ENCODE measurements at regions of chr5 and their contacts with region 1.

Region 1: GRCh38 chr5:96790961-96791504 is 16.7 kb downstream of the ERAP1 start:
- DNase-seq: peak; percentile 60
- ATAC-seq: peak; percentile 71
- H3K4me3 ChIP-seq: no peak overlapping the region
- H3K27ac ChIP-seq: no peak overlapping the region
- H3K4me1 ChIP-seq: peaks cover 16% of the 10 kb centered on the region
- H3K27me3 ChIP-seq: no peaks in the 10 kb centered on the region
- CTCF ChIP-seq: no peak

Region 2: DNA sequence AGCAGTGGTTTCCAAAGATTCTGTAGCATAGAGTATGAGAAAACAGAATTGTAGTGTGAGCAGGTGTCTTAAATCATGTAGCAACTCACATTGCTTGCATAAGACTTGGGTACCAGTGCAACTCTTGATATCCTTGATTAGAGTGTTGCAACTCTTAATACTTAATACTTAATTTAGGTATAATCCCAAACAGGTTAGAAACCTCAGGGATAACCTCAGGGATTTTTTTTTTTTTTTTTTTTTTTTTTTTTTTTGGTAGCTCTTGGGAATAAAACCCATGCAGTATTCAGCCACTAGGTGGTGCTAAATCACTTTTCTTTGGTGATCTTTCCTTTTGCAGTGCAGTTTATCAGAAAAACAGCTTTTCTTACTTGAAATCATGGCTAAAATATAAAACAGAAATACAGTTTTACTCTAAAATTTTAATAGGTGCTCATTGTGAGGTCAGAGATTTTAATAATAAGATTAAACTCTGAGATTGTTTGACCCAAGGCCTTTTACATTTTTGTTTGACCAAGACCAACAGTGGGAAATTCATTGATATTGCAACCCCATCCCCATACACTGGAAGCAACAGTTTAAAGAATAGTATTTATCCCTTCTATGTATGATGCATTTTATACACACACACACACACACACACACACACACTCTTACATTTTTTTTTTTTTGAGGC is 38.6 kb before region 1 on chr5:
- CTCF ChIA-PET with region 1: no interaction called
- POLR2A ChIA-PET with region 1: no interaction called
- intact Hi-C with region 1: no loop called
- DNase-seq: peak; percentile 87
- ATAC-seq: no peak
- H3K4me3 ChIP-seq: no peak overlapping the region
- H3K27ac ChIP-seq: no peak overlapping the region
- H3K4me1 ChIP-seq: no peaks in the 10 kb centered on the region
- H3K27me3 ChIP-seq: no peaks in the 10 kb centered on the region
- CTCF ChIP-seq: peak; percentile 91

Region 3: DNA sequence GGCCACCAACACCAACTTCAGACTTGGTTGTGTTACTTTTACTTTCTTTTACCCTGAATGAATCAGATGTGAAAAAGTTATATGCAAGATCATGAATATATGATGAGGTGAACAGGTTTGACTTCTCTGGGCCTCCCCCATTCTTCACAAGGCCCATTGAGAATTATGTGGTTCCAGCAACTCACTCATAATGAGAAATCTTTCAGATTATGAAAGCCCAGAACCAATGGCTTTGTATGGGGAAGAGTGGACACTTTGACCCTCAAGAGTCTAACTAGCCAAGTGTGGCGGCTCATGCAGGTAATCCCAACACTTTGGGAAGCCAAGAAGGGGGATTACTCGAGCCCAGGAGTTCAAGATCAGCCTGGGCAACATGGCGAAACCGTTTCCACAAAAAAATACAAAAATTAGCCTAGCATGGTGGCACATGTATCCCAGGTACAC is 128.7 kb after region 1 on chr5:
- CTCF ChIA-PET with region 1: no interaction called
- POLR2A ChIA-PET with region 1: interaction called, 12 read pairs
- intact Hi-C with region 1: no loop called
- DNase-seq: no peak
- ATAC-seq: no peak
- H3K4me3 ChIP-seq: no peak overlapping the region
- H3K27ac ChIP-seq: no peak overlapping the region
- H3K4me1 ChIP-seq: peaks cover 18% of the 10 kb centered on the region
- H3K27me3 ChIP-seq: no peaks in the 10 kb centered on the region
- CTCF ChIP-seq: no peak

Measured in PC-3 (cell line).